ENCODE measurements at regions of chr3 and their contacts with region 1.

Region 1: GRCh38 chr3:121545574-121546455 is at the start of gene POLQ:
- DNase-seq: peak; percentile 79 to 93 (median 82)
- ATAC-seq: peak; percentile 97
- H3K4me3 ChIP-seq: peak within 1 kb of the TSS; percentile 74
- H3K27ac ChIP-seq: peak within 1 kb of the TSS; percentile 78
- H3K4me1 ChIP-seq: peaks cover 0 to 2% of the 10 kb centered on the region in 2 experiments; a peak in 2 of 5 replicates
- H3K27me3 ChIP-seq: no peaks in the 10 kb centered on the region
- CTCF ChIP-seq: no peak
- EP300 ChIP-seq: peak; percentile 28; the same call in 1 of the 2 replicates
- POLR2A ChIP-seq: peak; percentile 82
- RAD21 ChIP-seq: no peak
- polyA plus RNA-seq, gene POLQ: 1.5 to 2.1 TPM

Region 2: GRCh38 chr3:121557426-121557934 is 11.7 kb after region 1 on chr3:
- CTCF ChIA-PET with region 1: no interaction called
- POLR2A ChIA-PET with region 1: no interaction called
- in situ Hi-C with region 1: no loop called
- intact Hi-C with region 1: no loop called
- DNase-seq: no peak
- ATAC-seq: no peak
- H3K4me3 ChIP-seq: no peak overlapping the region
- H3K27ac ChIP-seq: no peak overlapping the region
- H3K4me1 ChIP-seq: peaks cover 0 to 4% of the 10 kb centered on the region in 2 experiments; a peak in 3 of 5 replicates
- H3K27me3 ChIP-seq: no peaks in the 10 kb centered on the region; a peak in 2 of 5 replicates
- CTCF ChIP-seq: no peak
- EP300 ChIP-seq: no peak
- POLR2A ChIP-seq: no peak
- RAD21 ChIP-seq: no peak

Region 3: GRCh38 chr3:121855555-121855954 is 309.7 kb after region 1 on chr3:
- CTCF ChIA-PET with region 1: no interaction called
- POLR2A ChIA-PET with region 1: no interaction called
- in situ Hi-C with region 1: no loop called
- intact Hi-C with region 1: loop called (anchors 10 kb)
- DNase-seq: peak in 2 of 4 experiments; percentile 9 to 18
- ATAC-seq: peak; percentile 56; the same call in 1 of the 3 replicates
- H3K4me3 ChIP-seq: no peak overlapping the region
- H3K27ac ChIP-seq: no peak overlapping the region
- H3K4me1 ChIP-seq: no peaks in the 10 kb centered on the region
- H3K27me3 ChIP-seq: no peaks in the 10 kb centered on the region
- CTCF ChIP-seq: peak; percentile 4 to 46 (median 19); a peak in 2 of 6 replicates
- EP300 ChIP-seq: no peak
- POLR2A ChIP-seq: no peak
- RAD21 ChIP-seq: peak in 1 of 2 experiments; percentile 42; a peak in 2 of 4 replicates

Region 4: DNA sequence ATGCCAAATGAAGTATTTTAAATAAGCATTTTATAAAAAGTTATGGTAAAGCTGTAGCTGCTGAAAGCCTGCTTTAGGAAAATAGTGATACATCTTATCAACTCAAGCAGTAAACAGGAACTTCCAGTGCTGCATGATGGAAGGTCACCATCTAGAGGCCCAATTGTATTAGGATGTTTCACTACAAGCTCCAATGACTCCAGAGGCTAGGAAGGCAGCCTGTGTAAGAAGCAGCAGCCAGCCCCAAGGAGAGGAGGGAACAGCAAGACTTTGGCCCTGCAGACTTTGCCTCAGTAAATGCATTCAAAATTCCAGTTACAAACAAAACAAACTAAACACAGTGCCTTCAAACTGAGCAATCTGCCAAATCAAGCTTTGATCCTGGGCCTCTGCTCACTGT is 444.1 kb after region 1 on chr3:
- CTCF ChIA-PET with region 1: interaction called, 3 read pairs
- POLR2A ChIA-PET with region 1: no interaction called
- in situ Hi-C with region 1: no loop called
- intact Hi-C with region 1: loop called (anchors 5 kb)
- DNase-seq: no peak
- ATAC-seq: no peak
- H3K4me3 ChIP-seq: no peak overlapping the region
- H3K27ac ChIP-seq: no peak overlapping the region
- H3K4me1 ChIP-seq: peaks cover 0 to 5% of the 10 kb centered on the region in 2 experiments; a peak in 1 of 5 replicates
- H3K27me3 ChIP-seq: no peaks in the 10 kb centered on the region; a peak in 1 of 5 replicates
- CTCF ChIP-seq: peak in 1 of 3 experiments; percentile 38; a peak in 2 of 6 replicates
- EP300 ChIP-seq: no peak
- POLR2A ChIP-seq: no peak
- RAD21 ChIP-seq: peak; percentile 40 to 47; a peak in 3 of 4 replicates

Region 5: GRCh38 chr3:122101646-122102045 is 555.8 kb after region 1 on chr3:
- CTCF ChIA-PET with region 1: no interaction called
- POLR2A ChIA-PET with region 1: no interaction called
- in situ Hi-C with region 1: no loop called
- intact Hi-C with region 1: loop called (anchors 5 kb)
- DNase-seq: peak in 2 of 4 experiments; percentile 24 to 51
- ATAC-seq: peak; percentile 73
- H3K4me3 ChIP-seq: no peak overlapping the region
- H3K27ac ChIP-seq: no peak overlapping the region
- H3K4me1 ChIP-seq: no peaks in the 10 kb centered on the region
- H3K27me3 ChIP-seq: no peaks in the 10 kb centered on the region; a peak in 1 of 5 replicates
- CTCF ChIP-seq: peak; percentile 27 to 70 (median 51); a peak in 4 of 6 replicates
- EP300 ChIP-seq: no peak
- POLR2A ChIP-seq: no peak
- RAD21 ChIP-seq: peak; percentile 67 to 84

Region 6: DNA sequence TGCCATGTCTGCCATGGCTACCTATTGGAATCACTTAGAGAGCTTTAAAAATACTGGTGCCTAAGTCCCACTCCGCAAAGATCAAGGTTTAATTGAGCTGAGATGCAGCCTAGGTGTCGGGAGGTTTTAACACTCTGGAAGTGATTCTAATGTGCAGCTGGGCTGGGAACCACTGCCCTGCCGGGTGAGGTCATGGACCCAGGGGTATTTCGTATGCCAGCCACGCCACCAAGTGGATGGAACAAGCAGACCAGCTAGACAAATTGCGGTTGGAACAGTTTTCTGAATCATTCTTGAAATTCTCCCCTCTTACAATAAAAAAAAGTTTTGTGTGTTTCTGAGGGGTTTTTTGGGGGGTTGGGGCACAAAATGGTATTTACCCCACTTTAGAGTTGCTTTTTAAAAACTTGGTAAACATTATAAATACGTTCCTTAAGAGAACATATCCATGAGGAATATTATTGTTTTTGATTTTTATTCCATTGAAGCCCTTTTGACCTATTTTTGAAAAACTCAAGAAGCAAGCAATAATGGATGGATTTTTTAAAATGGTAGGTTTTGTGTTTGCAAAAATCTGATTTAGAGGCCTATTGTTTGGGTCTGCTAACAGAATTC is 713.0 kb after region 1 on chr3:
- CTCF ChIA-PET with region 1: interaction called, 6 read pairs
- POLR2A ChIA-PET with region 1: no interaction called
- in situ Hi-C with region 1: no loop called
- intact Hi-C with region 1: loop called (anchors 1 kb)
- DNase-seq: peak; percentile 8 to 38 (median 20)
- ATAC-seq: peak; percentile 75
- H3K4me3 ChIP-seq: no peak overlapping the region
- H3K27ac ChIP-seq: no peak overlapping the region
- H3K4me1 ChIP-seq: no peaks in the 10 kb centered on the region
- H3K27me3 ChIP-seq: peaks cover 5 to 15% of the 10 kb centered on the region in 2 experiments; a peak in 3 of 5 replicates
- CTCF ChIP-seq: peak; percentile 44 to 58 (median 57); a peak in 5 of 6 replicates
- EP300 ChIP-seq: no peak
- POLR2A ChIP-seq: no peak
- RAD21 ChIP-seq: peak; percentile 58 to 68

Region 7: GRCh38 chr3:122299872-122300460 is 754.2 kb after region 1 on chr3:
- CTCF ChIA-PET with region 1: interaction called, 4 read pairs
- POLR2A ChIA-PET with region 1: no interaction called
- in situ Hi-C with region 1: no loop called
- intact Hi-C with region 1: loop called (anchors 1 kb)
- DNase-seq: peak; percentile 26 to 46 (median 30)
- ATAC-seq: no peak
- H3K4me3 ChIP-seq: no peak overlapping the region
- H3K27ac ChIP-seq: no peak overlapping the region
- H3K4me1 ChIP-seq: no peaks in the 10 kb centered on the region
- H3K27me3 ChIP-seq: no peaks in the 10 kb centered on the region
- CTCF ChIP-seq: peak; percentile 44 to 64 (median 46); a peak in 3 of 6 replicates
- EP300 ChIP-seq: no peak
- POLR2A ChIP-seq: no peak
- RAD21 ChIP-seq: peak; percentile 49 to 69

Region 8: DNA sequence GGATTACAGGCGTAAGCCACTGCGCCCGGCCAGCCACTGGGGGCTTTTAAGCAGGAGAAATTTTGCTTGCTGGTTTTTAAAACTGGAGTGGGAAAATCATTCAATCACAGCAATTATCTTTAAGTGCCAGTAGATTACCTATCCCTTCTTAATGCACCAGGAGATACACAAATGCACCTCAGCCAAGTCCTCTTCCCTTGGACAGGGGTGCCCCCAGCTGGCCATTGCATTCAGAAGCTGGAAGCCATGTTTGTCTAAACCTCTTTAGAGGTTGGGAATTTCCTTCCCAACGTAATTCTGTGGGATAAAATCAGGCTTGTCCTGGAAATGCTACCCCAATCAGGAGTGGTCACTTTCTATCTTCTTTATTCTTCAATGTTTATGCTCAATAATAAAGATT is 810.6 kb after region 1 on chr3:
- CTCF ChIA-PET with region 1: interaction called, 3 read pairs
- POLR2A ChIA-PET with region 1: no interaction called
- in situ Hi-C with region 1: loop called (anchors 5 kb)
- intact Hi-C with region 1: loop called (anchors 1 kb)
- DNase-seq: peak in 3 of 4 experiments; percentile 16 to 50 (median 39)
- ATAC-seq: peak; percentile 82
- H3K4me3 ChIP-seq: no peak overlapping the region
- H3K27ac ChIP-seq: no peak overlapping the region
- H3K4me1 ChIP-seq: peaks cover 0 to 8% of the 10 kb centered on the region in 2 experiments; a peak in 3 of 5 replicates
- H3K27me3 ChIP-seq: no peaks in the 10 kb centered on the region
- CTCF ChIP-seq: peak; percentile 59 to 68 (median 62)
- EP300 ChIP-seq: no peak
- POLR2A ChIP-seq: no peak
- RAD21 ChIP-seq: peak; percentile 72 to 74